ENCODE measurements at regions of chr1 and their contacts with region 1.

Region 1: DNA sequence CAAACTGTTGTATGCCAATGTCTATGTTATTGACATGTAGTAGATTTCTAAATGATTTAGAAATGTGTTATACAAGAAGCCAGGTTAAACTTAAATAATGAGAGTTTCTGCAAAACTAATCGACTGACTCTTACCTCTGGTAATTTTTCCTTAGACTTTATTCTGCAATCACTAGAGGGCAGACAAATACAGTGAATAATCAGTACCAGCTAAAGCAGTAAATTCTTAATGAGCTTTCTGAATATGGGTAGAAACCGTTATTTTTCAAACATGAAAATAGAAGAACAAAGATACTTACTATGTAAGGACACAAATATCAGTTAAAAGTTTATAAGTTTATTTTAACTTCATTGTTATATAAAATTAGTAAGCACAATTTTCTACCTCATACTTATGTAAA is 97.9 kb upstream of the RGS1 start:
- DNase-seq: peak; percentile 81
- H3K4me3 ChIP-seq: no peak overlapping the region
- H3K27ac ChIP-seq: no peak overlapping the region
- H3K4me1 ChIP-seq: peaks cover 21% of the 10 kb centered on the region
- H3K27me3 ChIP-seq: no peaks in the 10 kb centered on the region
- CTCF ChIP-seq: peak; percentile 80

Region 2: DNA sequence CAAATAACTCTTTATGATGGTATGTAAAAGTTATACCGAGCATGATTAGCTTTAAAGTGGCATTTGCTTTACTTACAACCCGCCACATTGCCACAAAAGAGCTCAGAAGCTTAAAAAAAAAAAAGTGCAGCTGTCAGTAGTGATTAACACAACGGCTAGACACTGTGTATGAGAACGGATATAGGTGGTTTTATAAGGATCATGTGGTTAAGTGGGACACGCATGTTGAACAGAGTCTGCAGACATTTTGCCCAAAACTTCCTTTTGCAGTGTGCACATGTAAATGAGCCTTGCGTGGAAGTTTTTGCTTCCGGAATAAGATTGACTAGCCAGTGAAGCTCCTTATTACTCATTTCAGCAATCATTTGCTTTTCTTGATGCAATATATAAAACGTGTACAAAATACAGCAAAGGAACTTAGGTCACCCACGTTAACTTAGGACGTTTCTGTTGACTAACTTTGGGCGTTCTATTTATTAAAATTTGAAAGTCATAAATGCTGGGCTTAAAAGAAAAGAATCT is 39.2 kb after region 1 on chr1:
- CTCF ChIA-PET with region 1: interaction called, 6 read pairs
- POLR2A ChIA-PET with region 1: no interaction called
- intact Hi-C with region 1: loop called (anchors 5 kb)
- DNase-seq: peak; percentile 96
- H3K4me3 ChIP-seq: no peak overlapping the region
- H3K27ac ChIP-seq: peak overlapping the region; percentile 96
- H3K4me1 ChIP-seq: peaks cover 64% of the 10 kb centered on the region
- H3K27me3 ChIP-seq: no peaks in the 10 kb centered on the region
- CTCF ChIP-seq: no peak

Region 3: GRCh38 chr1:192580351-192580962 is 102.8 kb after region 1 on chr1:
- CTCF ChIA-PET with region 1: no interaction called
- POLR2A ChIA-PET with region 1: interaction called, 5 read pairs
- intact Hi-C with region 1: loop called (anchors 1 kb)
- DNase-seq: peak; percentile 82
- H3K4me3 ChIP-seq: no peak overlapping the region
- H3K27ac ChIP-seq: peak overlapping the region; percentile 3
- H3K4me1 ChIP-seq: peaks cover 55% of the 10 kb centered on the region
- H3K27me3 ChIP-seq: no peaks in the 10 kb centered on the region
- CTCF ChIP-seq: peak; percentile 77

Region 4: GRCh38 chr1:192609110-192610079 is 131.8 kb after region 1 on chr1:
- CTCF ChIA-PET with region 1: interaction called, 5 read pairs
- POLR2A ChIA-PET with region 1: no interaction called
- intact Hi-C with region 1: loop called (anchors 1 kb)
- DNase-seq: no peak
- H3K4me3 ChIP-seq: no peak overlapping the region
- H3K27ac ChIP-seq: no peak overlapping the region
- H3K4me1 ChIP-seq: peaks cover 34% of the 10 kb centered on the region
- H3K27me3 ChIP-seq: no peaks in the 10 kb centered on the region
- CTCF ChIP-seq: no peak

Region 5: GRCh38 chr1:193019442-193020026 is 541.9 kb after region 1 on chr1:
- CTCF ChIA-PET with region 1: interaction called, 11 read pairs
- POLR2A ChIA-PET with region 1: no interaction called
- intact Hi-C with region 1: loop called (anchors 5 kb)
- DNase-seq: peak; percentile 73
- H3K4me3 ChIP-seq: no peak overlapping the region
- H3K27ac ChIP-seq: no peak overlapping the region
- H3K4me1 ChIP-seq: no peaks in the 10 kb centered on the region
- H3K27me3 ChIP-seq: no peaks in the 10 kb centered on the region
- CTCF ChIP-seq: peak; percentile 66

Region 6: GRCh38 chr1:193121616-193122593 is 644.3 kb after region 1 on chr1 and contains the start of gene CDC73:
- CTCF ChIA-PET with region 1: interaction called, 3 read pairs
- POLR2A ChIA-PET with region 1: no interaction called
- intact Hi-C with region 1: loop called (anchors 2 kb)
- DNase-seq: peak; percentile 98
- H3K4me3 ChIP-seq: peak within 1 kb of the TSS; percentile 86
- H3K27ac ChIP-seq: peak within 1 kb of the TSS; percentile 95
- H3K4me1 ChIP-seq: peaks cover 9% of the 10 kb centered on the region
- H3K27me3 ChIP-seq: no peaks in the 10 kb centered on the region
- CTCF ChIP-seq: peak; percentile 99
- total RNA-seq, gene CDC73: 61.5 and 71.0 TPM in 2 replicates

Region 7: DNA sequence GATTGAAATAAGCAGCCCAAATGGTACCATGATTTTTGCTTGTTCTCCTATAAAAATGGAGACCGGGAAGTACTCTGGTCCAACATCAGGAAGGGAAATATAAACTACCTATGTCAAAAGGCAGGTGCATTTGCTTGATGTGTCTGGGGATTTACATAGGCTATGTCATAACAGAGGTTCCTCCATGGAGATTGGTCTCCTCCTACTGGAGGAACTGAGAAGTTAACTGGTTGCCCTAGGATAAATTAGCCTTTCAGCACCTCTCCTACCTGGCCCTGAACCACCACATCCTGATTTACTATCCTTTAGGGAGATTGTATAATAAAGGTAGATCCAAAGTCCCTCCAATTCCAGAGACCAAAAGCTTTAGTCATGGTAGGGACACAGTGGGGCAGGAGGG is 1818.1 kb after region 1 on chr1:
- CTCF ChIA-PET with region 1: no interaction called
- POLR2A ChIA-PET with region 1: no interaction called
- intact Hi-C with region 1: loop called (anchors 10 kb)
- DNase-seq: peak; percentile 31
- H3K4me3 ChIP-seq: no peak overlapping the region
- H3K27ac ChIP-seq: no peak overlapping the region
- H3K4me1 ChIP-seq: no peaks in the 10 kb centered on the region
- H3K27me3 ChIP-seq: no peaks in the 10 kb centered on the region
- CTCF ChIP-seq: peak; percentile 50

Measured in A673 (cell line).